Activated T-helper 1 cell treated with anti-CD3 and anti-CD28 coated beads, Interleukin-12 subunit alpha, Interleukin-12 subunit beta, Interleukin-2, Interleukin-4 antibody, amounts not matched to agents 30 ng/mL and 10 ng/mL and 1 ng/mL, durations not matched to agents 14 hours and 24 hours and 36 hours (primary cell): ENCODE measurements at regions of chr15 and their contacts with region 1.

Region 1: GRCh38 chr15:82809404-82810060 is at the start of gene WHAMM:
- DNase-seq: peak; percentile 95
- H3K4me3 Mint-ChIP-seq: peak within 1 kb of the TSS; percentile 92
- H3K27ac Mint-ChIP-seq: peak within 1 kb of the TSS; percentile 94
- H3K4me1 Mint-ChIP-seq: peaks cover 34% of the 10 kb centered on the region
- H3K27me3 Mint-ChIP-seq: peaks cover 19% of the 10 kb centered on the region
- total RNA-seq, gene WHAMM: 7.1 and 7.5 TPM in 2 replicates

Region 2: GRCh38 chr15:81296673-81297072 is 1512.9 kb before region 1 on chr15:
- intact Hi-C with region 1: loop called (anchors 5 kb)
- DNase-seq: peak; percentile 77
- H3K4me3 Mint-ChIP-seq: peak overlapping the region; percentile 97
- H3K27ac Mint-ChIP-seq: peak overlapping the region; percentile 94
- H3K4me1 Mint-ChIP-seq: peaks cover 95% of the 10 kb centered on the region
- H3K27me3 Mint-ChIP-seq: no peaks in the 10 kb centered on the region

Region 3: DNA sequence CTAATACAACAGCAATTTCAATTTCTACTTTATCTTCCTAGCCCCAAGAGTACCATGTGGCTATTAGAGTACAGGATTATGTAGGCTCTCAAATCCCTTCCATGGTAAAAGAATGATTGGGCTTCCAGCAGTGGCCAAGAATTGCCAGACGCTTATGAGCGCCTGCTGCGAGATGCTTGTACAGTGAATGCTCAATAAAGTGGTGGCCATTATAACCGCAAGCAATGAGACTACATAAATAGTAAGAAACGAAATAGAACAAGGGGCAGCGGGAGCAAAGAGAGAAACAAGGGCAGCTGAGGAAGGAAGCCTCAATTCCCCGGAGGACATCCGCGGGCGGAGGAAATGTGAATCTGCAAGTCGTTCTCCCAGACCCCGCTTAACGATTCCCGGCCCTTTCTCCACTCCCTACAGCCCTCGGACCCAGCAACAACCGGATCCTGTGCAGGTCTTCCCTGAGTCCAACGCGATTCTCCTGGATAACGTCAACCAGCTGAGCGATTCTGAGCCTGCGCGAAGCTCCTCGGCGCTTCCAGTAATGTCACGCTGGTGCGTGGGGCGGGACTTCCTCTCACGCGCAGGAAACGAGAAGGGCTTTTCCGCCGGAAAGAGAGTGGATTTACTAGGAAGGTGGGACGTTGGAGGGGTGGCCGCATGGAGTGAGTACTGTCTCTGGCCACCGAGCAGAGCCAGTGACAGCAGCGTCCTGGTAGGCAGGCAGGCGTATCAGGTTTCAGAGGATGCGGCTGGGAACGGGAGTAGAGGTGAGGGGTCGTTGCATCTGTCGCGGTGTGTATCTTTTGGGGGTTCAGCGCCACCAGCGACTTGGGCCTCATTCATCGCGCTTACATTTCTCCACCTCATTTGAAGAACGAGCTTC is 59.3 kb before region 1 on chr15:
- intact Hi-C with region 1: loop called (anchors 1 kb)
- DNase-seq: peak; percentile 82
- H3K4me3 Mint-ChIP-seq: peak overlapping the region; percentile 100
- H3K27ac Mint-ChIP-seq: peak overlapping the region; percentile 97
- H3K4me1 Mint-ChIP-seq: peaks cover 39% of the 10 kb centered on the region
- H3K27me3 Mint-ChIP-seq: no peaks in the 10 kb centered on the region

Region 4: DNA sequence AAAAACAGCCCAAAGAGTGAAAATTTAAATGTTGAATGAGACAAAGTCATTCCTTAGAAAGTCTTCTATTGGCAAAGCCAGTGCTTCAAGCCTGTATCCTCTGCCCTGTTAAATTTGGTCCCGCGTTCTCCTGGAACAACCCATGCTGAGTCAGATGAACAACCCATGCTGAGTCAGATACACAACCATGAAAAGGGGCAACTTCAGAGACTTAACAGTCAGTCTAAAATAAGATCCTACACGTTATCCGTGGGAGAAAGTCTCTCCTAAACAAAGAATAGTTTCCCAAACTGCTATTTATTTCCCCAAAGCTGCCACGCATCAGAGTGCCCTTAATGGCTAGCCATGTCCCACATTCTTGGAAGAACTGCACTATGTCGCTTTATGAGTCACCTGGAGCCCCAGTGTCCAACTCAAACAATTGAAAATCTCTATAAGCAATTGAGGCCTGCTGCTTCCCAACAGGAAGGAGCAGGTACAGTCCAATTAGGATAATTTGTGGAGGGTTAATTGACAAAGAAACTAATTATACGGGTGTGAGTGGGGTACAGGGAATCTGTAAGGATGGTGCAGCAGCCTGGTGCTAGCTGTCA is 66.0 kb after region 1 on chr15:
- intact Hi-C with region 1: no loop called
- DNase-seq: no peak
- H3K4me3 Mint-ChIP-seq: no peak overlapping the region
- H3K27ac Mint-ChIP-seq: no peak overlapping the region
- H3K4me1 Mint-ChIP-seq: no peaks in the 10 kb centered on the region
- H3K27me3 Mint-ChIP-seq: peaks cover 17% of the 10 kb centered on the region

Region 5: DNA sequence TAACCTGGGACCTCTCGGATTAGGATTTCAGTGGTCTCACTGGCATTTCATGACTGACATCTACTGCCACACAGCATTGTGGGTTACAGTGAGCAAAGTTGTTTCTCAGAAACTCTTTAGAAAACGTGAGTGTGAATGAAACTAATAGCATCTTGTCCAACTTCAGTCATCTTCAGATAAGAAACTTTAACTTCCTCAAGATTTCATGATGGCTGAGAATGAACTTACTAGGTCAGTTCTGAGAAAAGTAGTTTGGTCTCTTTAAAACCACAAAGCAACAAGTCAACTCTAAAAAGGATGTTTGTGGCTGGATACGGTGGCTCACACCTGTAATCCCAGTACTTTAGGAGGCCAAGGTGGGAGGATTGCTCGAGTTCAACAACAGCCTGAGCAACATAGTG is 157.1 kb after region 1 on chr15:
- intact Hi-C with region 1: loop called (anchors 1 kb)
- DNase-seq: peak; percentile 19
- H3K4me3 Mint-ChIP-seq: peak overlapping the region; percentile 13
- H3K27ac Mint-ChIP-seq: no peak overlapping the region
- H3K4me1 Mint-ChIP-seq: peaks cover 12% of the 10 kb centered on the region
- H3K27me3 Mint-ChIP-seq: peaks cover 37% of the 10 kb centered on the region

Region 6: GRCh38 chr15:83011271-83012075 is 201.9 kb after region 1 on chr15 and contains the start of gene C15orf40:
- intact Hi-C with region 1: loop called (anchors 1 kb)
- DNase-seq: peak; percentile 84
- H3K4me3 Mint-ChIP-seq: peak within 1 kb of the TSS; percentile 99
- H3K27ac Mint-ChIP-seq: peak within 1 kb of the TSS; percentile 98
- H3K4me1 Mint-ChIP-seq: peaks cover 50% of the 10 kb centered on the region
- H3K27me3 Mint-ChIP-seq: no peaks in the 10 kb centered on the region
- total RNA-seq, gene C15orf40: 24.2 and 29.0 TPM in 2 replicates

Region 7: GRCh38 chr15:83199288-83199687 is 389.8 kb after region 1 on chr15:
- intact Hi-C with region 1: loop called (anchors 2 kb)
- DNase-seq: no peak
- H3K4me3 Mint-ChIP-seq: peak overlapping the region; percentile 12
- H3K27ac Mint-ChIP-seq: peak overlapping the region; percentile 72
- H3K4me1 Mint-ChIP-seq: peaks cover 53% of the 10 kb centered on the region
- H3K27me3 Mint-ChIP-seq: peaks cover 17% of the 10 kb centered on the region